Adrenal gland (tissue), 19 donors: ENCODE measurements at regions of chr16 and their contacts with region 1.

Region 1: GRCh38 chr16:89860747-89861304 is 12.6 kb upstream of the TCF25 start:
- DNase-seq: peak; percentile 46 to 83 (median 63)
- H3K4me3 ChIP-seq: no peak overlapping the region
- H3K27ac ChIP-seq: no peak overlapping the region
- H3K4me1 ChIP-seq: peaks cover 6 to 12% of the 10 kb centered on the region in 2 donors
- H3K27me3 ChIP-seq: no peaks in the 10 kb centered on the region
- CTCF ChIP-seq: peak; percentile 90 to 97 (median 94)
- POLR2A ChIP-seq: no peak

Region 2: DNA sequence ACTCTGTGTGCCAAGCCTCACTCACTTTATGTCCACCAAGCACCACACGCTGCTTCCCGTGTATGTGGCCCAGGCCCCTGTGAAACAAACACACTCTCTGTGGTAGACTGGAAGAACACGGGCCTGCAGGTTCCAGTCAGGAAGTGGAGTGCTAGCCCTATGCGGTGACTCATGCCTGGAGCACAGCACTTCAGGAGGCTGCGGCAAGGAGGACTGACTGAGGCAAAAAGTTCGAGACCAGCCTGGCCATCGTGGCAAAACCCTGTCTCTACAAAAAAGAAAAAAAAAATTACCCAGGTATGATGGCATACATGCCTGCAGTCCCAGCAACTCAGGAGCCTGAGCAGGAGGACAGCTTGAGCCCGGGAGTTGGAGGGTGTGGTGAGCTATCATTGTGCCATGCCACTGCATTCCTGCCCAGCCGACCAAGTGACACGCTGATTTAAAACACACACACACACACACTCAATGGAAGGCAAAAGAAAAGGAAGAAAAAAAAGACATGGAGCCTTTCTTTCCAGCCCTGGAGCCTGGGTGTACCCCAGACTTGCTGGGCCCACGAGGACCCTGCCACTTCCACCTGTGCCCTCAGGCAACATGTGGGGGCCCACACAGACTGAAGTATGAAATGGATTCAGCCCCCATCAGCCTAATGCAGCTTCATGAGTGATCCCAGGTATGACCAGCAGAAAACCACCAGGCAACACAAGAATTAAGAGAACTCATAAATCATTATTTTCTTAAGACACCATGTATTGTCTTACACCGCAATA is 497.0 kb before region 1 on chr16:
- intact Hi-C with region 1: no loop called
- DNase-seq: peak in 2 of 7 donors; percentile 49 to 69
- H3K4me3 ChIP-seq: no peak overlapping the region
- H3K27ac ChIP-seq: no peak overlapping the region
- H3K4me1 ChIP-seq: peaks cover 5 to 74% of the 10 kb centered on the region in 2 donors
- H3K27me3 ChIP-seq: no peaks in the 10 kb centered on the region
- CTCF ChIP-seq: no peak
- POLR2A ChIP-seq: no peak

Region 3: DNA sequence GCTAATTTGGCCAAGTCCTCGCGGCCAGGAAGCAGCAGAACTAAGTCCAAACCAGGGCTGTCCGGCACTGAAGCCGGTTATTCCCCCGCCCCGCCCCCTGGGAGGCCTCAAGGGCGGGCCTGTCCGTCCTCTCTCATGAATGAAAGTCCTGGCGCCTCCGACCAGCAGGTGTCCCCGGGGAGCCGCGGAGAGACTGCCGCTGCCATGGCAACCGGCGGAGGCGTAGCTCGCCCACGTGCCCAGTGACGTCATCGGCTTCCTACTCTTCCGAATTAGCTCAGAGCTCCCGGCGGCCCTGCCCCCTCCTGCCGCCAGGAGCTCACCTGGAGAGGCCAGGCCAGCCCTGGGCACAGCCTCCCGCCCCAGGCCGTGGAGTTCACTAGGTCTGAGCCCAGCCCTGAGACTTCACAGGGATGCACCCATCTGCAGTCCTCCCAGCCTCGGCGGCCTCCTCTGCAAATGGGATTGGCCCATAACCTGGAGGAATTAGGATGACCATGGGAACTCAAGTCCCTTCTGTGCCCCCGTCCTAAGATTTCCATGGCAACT is 160.7 kb before region 1 on chr16:
- intact Hi-C with region 1: loop called (anchors 2 to 10 kb)
- DNase-seq: peak; percentile 99 to 100 (median 100)
- H3K4me3 ChIP-seq: peak overlapping the region in 2 of 4 donors; percentile 50 to 73
- H3K27ac ChIP-seq: peak overlapping the region; percentile 33 to 88 (median 74)
- H3K4me1 ChIP-seq: peaks cover 10 to 17% of the 10 kb centered on the region in 2 donors
- H3K27me3 ChIP-seq: no peaks in the 10 kb centered on the region
- CTCF ChIP-seq: peak; percentile 56 to 91 (median 86)
- POLR2A ChIP-seq: no peak

Region 4: GRCh38 chr16:89749647-89750046 is 111.2 kb before region 1 on chr16:
- intact Hi-C with region 1: loop called (anchors 5 to 10 kb)
- DNase-seq: peak in 3 of 7 donors; percentile 28 to 62 (median 41)
- H3K4me3 ChIP-seq: no peak overlapping the region
- H3K27ac ChIP-seq: no peak overlapping the region
- H3K4me1 ChIP-seq: no peaks in the 10 kb centered on the region
- H3K27me3 ChIP-seq: no peaks in the 10 kb centered on the region
- CTCF ChIP-seq: no peak
- POLR2A ChIP-seq: no peak

Region 5: DNA sequence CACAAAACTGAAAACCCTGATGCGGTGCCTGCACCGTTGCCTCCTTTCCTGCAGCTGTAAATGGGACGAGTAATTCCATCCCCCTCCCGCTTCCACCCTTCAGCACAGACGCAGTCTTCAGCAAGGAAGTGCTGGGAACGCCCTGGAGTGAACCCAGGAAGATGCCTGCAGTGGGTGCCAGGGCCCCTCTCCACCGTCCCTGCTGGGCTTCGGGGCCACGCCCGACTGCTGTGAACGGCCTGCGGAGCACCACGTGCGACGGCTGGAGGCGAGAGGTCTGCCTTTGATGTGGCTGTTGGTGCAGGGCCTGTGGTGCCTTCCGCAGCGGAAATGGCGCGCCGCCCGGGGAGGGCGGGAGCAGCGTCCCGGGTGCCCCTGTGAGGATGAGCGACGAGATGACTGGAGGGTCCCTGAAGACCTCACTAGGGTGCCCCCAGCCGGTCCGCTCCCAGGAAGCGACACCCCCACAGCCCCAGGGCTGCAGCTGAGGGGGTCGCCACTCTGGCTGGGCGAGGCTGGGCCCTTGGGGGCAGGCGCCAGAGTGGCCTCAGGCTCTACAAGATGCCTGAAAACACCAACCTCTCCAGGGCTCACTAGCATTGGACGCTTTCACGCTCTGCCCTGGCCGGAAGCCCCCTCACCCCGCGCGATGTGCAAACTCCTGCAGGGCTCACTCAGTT is 57.1 kb after region 1 on chr16:
- intact Hi-C with region 1: no loop called
- DNase-seq: peak in 6 of 7 donors; percentile 65 to 90 (median 86)
- H3K4me3 ChIP-seq: peak overlapping the region in 1 of 4 donors; percentile 44
- H3K27ac ChIP-seq: peak overlapping the region in 2 of 5 donors; percentile 54 to 75
- H3K4me1 ChIP-seq: peaks cover 24 to 43% of the 10 kb centered on the region in 2 donors
- H3K27me3 ChIP-seq: no peaks in the 10 kb centered on the region
- CTCF ChIP-seq: no peak
- POLR2A ChIP-seq: no peak